Astrocyte of the cerebellum (primary cell): ENCODE measurements at regions of chr17 and their contacts with region 1.

Region 1: DNA sequence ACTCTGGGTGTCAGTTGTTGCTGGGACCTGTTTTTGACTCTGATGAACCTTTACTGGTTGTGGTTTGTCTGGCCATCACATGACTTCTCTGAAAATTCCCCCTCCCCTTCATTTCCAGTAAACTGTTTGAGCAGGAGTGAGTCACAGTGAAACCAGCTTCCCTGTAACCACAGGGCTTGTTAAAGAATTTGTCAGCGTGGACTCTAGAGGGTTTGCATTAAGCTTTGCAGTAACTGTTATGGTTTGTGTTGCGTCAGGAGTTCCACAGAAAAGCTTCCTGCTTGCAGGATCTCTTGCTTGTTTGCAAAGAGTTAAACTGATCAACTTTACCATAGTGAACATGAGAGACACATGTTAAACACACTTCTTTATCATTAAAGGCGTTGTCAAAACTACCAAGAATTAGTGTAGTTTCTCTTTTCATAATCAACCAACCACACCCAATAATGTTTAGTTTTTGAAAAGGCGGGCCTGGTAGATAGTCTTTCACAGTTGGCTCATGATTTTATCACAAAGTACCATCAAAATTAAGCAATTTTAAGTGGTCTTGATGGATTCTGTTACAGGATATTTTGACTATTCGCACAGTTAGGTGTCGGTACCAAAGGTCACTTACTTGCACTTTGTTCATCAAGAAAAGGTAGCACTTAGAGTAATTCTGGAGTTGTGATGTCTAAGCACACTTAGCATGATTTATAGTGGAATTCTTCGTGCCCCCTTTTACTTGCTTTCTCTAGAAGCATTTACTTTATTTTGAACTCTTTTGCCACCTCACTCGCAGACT is 79.3 kb downstream of the VMP1 start:
- DNase-seq: peak; percentile 100
- H3K4me3 ChIP-seq: no peak overlapping the region
- CTCF ChIP-seq: no peak

Region 2: GRCh38 chr17:59842901-59843652 is 56.3 kb after region 1 on chr17:
- in situ Hi-C with region 1: loop called (anchors 5 kb)
- DNase-seq: peak; percentile 98
- H3K4me3 ChIP-seq: no peak overlapping the region
- CTCF ChIP-seq: no peak

Region 3: GRCh38 chr17:59853168-59853918 is 66.6 kb after region 1 on chr17:
- in situ Hi-C with region 1: no loop called
- DNase-seq: no peak
- H3K4me3 ChIP-seq: no peak overlapping the region
- CTCF ChIP-seq: peak; percentile 52

Region 4: GRCh38 chr17:59892924-59893676 is 106.4 kb after region 1 on chr17 and contains the starts of genes RPS6KB1 and TUBD1:
- in situ Hi-C with region 1: no loop called
- DNase-seq: peak; percentile 99
- H3K4me3 ChIP-seq: peak within 1 kb of the TSS; percentile 97
- CTCF ChIP-seq: no peak